ENCODE measurements at regions of chr2 and their contacts with region 1.

Region 1: DNA sequence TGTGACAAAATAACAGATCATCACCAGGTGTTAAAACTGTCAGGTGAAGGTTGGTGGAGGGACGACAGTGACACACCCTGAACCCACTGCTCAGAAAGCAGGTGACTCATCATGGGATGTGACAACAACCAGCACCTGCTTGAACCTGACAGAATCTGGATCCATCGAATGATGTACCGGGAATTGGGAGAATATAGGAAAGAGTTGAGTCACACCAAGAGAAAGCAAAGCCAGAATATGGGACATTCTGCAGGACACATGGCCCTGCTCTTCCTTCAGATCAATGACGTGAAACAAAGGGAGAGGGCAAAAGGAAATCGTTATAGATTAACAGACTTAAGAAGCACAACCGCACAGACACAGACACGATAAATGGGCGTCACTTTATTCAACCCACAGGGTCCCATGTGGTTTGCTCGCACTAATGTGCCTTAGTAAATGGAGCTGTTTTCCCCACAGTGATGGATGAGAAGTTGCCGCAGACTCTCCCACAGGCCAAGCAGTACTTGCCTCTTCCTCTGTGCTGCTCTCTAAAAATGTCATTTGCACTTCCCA is 100.1 kb downstream of the CRACDL start:
- DNase-seq: no peak
- ATAC-seq: no peak
- H3K4me3 ChIP-seq: no peak overlapping the region
- H3K27ac ChIP-seq: no peak overlapping the region
- H3K4me1 ChIP-seq: no peaks in the 10 kb centered on the region
- CTCF ChIP-seq: no peak
- EP300 ChIP-seq: no peak
- POLR2A ChIP-seq: no peak
- RAD21 ChIP-seq: no peak

Region 2: GRCh38 chr2:98295721-98296414 is 540.0 kb before region 1 on chr2:
- CTCF ChIA-PET with region 1: no interaction called
- POLR2A ChIA-PET with region 1: no interaction called
- DNase-seq: no peak
- ATAC-seq: peak; percentile 31 to 81; a peak in 2 of 6 replicates
- H3K4me3 ChIP-seq: no peak overlapping the region
- H3K27ac ChIP-seq: no peak overlapping the region
- H3K4me1 ChIP-seq: no peaks in the 10 kb centered on the region
- CTCF ChIP-seq: peak; percentile 16; the same call in 2 of the 3 replicates
- EP300 ChIP-seq: no peak
- POLR2A ChIP-seq: no peak
- RAD21 ChIP-seq: peak in 1 of 2 experiments; percentile 41; a peak in 4 of 5 replicates

Region 3: DNA sequence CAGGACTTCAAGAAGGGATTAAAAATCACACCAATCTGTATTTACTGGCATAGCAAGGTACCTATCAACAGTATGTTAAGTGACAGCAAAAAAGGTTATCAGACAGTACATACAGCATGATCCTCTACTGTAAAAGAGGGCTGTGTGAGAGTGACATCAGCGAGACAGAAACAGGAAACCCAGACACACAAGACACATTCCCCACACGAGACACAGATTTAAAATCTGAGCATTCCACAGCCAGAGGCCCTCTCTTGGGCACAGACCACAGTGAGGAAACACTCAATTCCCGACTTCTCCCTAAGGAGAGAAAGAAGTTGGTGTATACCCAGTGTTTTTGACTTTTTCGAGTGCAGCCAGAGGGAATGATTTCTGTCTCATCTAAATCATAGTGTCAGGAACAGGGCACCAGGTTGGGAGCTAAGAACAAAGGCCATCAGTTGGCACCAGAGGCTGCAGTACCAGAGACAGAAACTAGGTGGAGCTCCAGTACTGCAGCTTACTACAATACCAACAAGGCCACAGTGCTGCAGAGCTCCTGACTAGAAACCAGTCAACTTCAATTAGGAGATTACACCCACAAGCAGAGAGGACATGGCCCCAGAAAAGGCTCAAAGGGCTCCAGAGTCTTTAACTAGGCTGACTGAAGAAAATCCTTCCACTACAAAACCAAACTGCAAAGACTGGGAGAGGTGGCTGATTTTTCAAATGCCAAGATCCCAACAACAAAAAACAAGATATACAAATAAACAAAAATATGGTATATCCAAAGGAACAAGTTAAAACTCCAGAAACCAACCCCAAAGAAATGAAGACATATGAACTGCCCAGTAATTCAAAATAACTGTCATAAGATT is 186.5 kb before region 1 on chr2:
- CTCF ChIA-PET with region 1: interaction called, 31 read pairs
- POLR2A ChIA-PET with region 1: no interaction called
- DNase-seq: peak; percentile 13 to 76
- ATAC-seq: peak; percentile 97 to 98
- H3K4me3 ChIP-seq: no peak overlapping the region
- H3K27ac ChIP-seq: no peak overlapping the region
- H3K4me1 ChIP-seq: no peaks in the 10 kb centered on the region
- CTCF ChIP-seq: peak; percentile 93
- EP300 ChIP-seq: no peak
- POLR2A ChIP-seq: no peak
- RAD21 ChIP-seq: peak; percentile 94 to 98

Region 4: DNA sequence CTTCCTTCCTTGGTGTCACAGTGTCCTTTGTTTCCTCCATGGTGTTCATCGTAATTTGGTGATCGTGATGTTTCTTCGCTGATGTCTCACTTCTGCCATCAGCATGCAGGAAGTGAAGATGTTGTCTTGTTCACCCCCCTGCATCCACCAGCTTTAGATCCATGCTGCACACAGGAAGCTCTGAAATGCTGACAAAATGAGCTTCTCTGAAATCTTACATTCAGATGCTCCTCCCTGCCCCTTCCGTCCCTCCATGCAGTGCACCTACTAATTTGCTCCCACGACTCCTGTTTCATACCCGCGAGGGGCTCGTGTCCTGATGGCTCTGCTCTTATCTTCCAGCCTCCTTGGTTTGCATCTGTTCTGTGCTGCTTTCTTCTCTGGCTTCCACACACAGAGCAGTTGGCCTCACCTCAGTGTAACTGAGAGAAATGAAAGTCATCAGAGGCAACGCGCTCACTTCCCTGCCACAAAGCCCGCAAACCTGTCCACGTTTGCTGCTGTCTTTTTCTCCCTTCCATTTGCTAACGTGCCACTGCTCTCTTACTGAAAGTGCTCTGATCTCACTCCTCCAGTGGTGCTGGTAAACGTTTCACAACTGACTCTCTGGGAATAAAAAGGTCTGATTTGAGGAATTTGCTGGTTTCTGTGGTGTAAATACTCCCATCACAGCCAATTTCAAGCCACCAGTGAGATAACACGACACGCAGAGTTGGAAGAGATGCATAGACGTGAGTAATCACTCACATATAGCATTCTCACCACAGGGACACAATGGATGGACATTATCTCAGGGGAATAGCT is 64.0 kb before region 1 on chr2:
- CTCF ChIA-PET with region 1: no interaction called
- POLR2A ChIA-PET with region 1: no interaction called
- DNase-seq: no peak
- ATAC-seq: no peak
- H3K4me3 ChIP-seq: no peak overlapping the region
- H3K27ac ChIP-seq: no peak overlapping the region
- H3K4me1 ChIP-seq: peaks cover 13% of the 10 kb centered on the region; the same call in 2 of the 3 replicates
- CTCF ChIP-seq: no peak
- EP300 ChIP-seq: no peak
- POLR2A ChIP-seq: no peak
- RAD21 ChIP-seq: no peak

Region 5: GRCh38 chr2:98822301-98823164 is 13.4 kb before region 1 on chr2:
- CTCF ChIA-PET with region 1: interaction called, 13 read pairs
- POLR2A ChIA-PET with region 1: no interaction called
- DNase-seq: no peak
- ATAC-seq: no peak
- H3K4me3 ChIP-seq: no peak overlapping the region
- H3K27ac ChIP-seq: no peak overlapping the region
- H3K4me1 ChIP-seq: no peaks in the 10 kb centered on the region
- CTCF ChIP-seq: no peak
- EP300 ChIP-seq: no peak
- POLR2A ChIP-seq: no peak
- RAD21 ChIP-seq: no peak

Region 6: DNA sequence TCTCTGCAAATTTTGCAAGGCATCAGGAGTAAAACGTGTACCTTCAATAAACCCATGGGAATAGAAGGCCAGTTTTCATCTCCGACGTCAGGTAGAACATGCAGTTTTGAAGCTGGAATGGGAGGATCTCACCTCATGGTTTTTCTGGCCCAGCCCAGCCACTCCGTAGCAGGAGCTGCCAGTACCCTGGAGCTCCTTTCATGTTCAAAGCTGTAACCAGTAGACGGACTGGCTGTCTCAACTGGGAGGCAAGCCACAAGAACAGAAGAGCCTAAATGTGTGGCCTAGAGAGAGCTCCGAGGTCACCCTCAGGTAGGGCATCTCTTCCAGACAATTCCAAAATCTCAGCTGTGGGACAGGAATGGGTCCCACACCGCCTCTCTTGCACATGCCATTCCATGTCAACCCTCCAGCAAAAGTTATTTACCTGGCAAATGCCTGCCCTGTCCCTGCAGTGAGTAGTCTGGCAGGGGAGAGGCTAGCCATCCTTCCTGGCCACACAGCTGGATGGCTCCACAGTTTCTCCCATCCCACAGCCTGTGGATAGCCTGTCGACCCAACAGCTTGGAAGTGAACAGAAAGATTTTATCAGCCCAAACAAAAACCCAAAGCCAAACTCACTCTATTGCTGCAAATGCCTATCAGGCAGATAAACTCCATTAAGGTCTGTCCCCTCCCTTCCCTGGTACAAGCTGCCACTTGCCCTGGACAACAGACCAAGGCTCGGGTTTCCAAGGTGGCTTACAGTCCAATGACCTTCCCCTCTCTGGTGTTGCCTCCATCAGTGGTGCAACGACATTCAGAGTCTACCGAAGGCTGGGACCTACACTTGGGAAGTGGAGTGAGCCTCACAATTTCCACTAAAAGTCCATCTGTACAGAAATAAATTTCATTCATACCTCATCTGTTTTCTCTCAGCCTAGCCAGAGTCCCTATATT is 72.3 kb after region 1 on chr2:
- CTCF ChIA-PET with region 1: no interaction called
- POLR2A ChIA-PET with region 1: no interaction called
- DNase-seq: no peak
- ATAC-seq: no peak
- H3K4me3 ChIP-seq: no peak overlapping the region
- H3K27ac ChIP-seq: peak overlapping the region; percentile 25 to 43; a peak in 2 of 6 replicates
- H3K4me1 ChIP-seq: peaks cover 38% of the 10 kb centered on the region
- CTCF ChIP-seq: no peak
- EP300 ChIP-seq: no peak
- POLR2A ChIP-seq: no peak
- RAD21 ChIP-seq: no peak

Measured in A549 (cell line).